Activated naive CD4-positive, alpha-beta T cell treated with anti-CD3 and anti-CD28 coated beads for 36 hours (primary cell): ENCODE measurements at regions of chr5 and their contacts with region 1.

Region 1: GRCh38 chr5:77775790-77776553 is at the start of gene TBCA:
- DNase-seq: peak; percentile 81
- H3K4me3 Mint-ChIP-seq: peak within 1 kb of the TSS; percentile 93
- H3K27ac Mint-ChIP-seq: peak within 1 kb of the TSS; percentile 96
- H3K4me1 Mint-ChIP-seq: peaks cover 46% of the 10 kb centered on the region
- H3K27me3 Mint-ChIP-seq: no peaks in the 10 kb centered on the region
- total RNA-seq, gene TBCA: 168 to 190 TPM

Region 2: GRCh38 chr5:76733049-76733417 is 1042.9 kb before region 1 on chr5:
- CTCF ChIA-PET with region 1: no interaction called
- intact Hi-C with region 1: no loop called
- DNase-seq: no peak
- H3K4me3 Mint-ChIP-seq: no peak overlapping the region
- H3K27ac Mint-ChIP-seq: no peak overlapping the region
- H3K4me1 Mint-ChIP-seq: peaks cover 4% of the 10 kb centered on the region
- H3K27me3 Mint-ChIP-seq: no peaks in the 10 kb centered on the region

Region 3: GRCh38 chr5:77139001-77139400 is 637.0 kb before region 1 on chr5:
- CTCF ChIA-PET with region 1: no interaction called
- intact Hi-C with region 1: no loop called
- DNase-seq: no peak
- H3K4me3 Mint-ChIP-seq: no peak overlapping the region
- H3K27ac Mint-ChIP-seq: no peak overlapping the region
- H3K4me1 Mint-ChIP-seq: no peaks in the 10 kb centered on the region
- H3K27me3 Mint-ChIP-seq: peaks cover 3% of the 10 kb centered on the region

Region 4: GRCh38 chr5:77379558-77380061 is 396.4 kb before region 1 on chr5:
- CTCF ChIA-PET with region 1: no interaction called
- intact Hi-C with region 1: loop called (anchors 5 kb)
- DNase-seq: peak; percentile 86
- H3K4me3 Mint-ChIP-seq: no peak overlapping the region
- H3K27ac Mint-ChIP-seq: no peak overlapping the region
- H3K4me1 Mint-ChIP-seq: peaks cover 29% of the 10 kb centered on the region
- H3K27me3 Mint-ChIP-seq: peaks cover 14% of the 10 kb centered on the region

Region 5: GRCh38 chr5:77663090-77663863 is 112.7 kb before region 1 on chr5:
- CTCF ChIA-PET with region 1: no interaction called
- intact Hi-C with region 1: loop called (anchors 2 kb)
- DNase-seq: no peak
- H3K4me3 Mint-ChIP-seq: no peak overlapping the region
- H3K27ac Mint-ChIP-seq: no peak overlapping the region
- H3K4me1 Mint-ChIP-seq: peaks cover 15% of the 10 kb centered on the region
- H3K27me3 Mint-ChIP-seq: peaks cover 27% of the 10 kb centered on the region

Region 6: GRCh38 chr5:77867194-77867691 is 91.3 kb after region 1 on chr5:
- CTCF ChIA-PET with region 1: no interaction called
- intact Hi-C with region 1: no loop called
- DNase-seq: no peak
- H3K4me3 Mint-ChIP-seq: no peak overlapping the region
- H3K27ac Mint-ChIP-seq: no peak overlapping the region
- H3K4me1 Mint-ChIP-seq: no peaks in the 10 kb centered on the region
- H3K27me3 Mint-ChIP-seq: no peaks in the 10 kb centered on the region

Region 7: GRCh38 chr5:78359831-78360673 is 584.1 kb after region 1 on chr5 and contains the start of gene SCAMP1:
- CTCF ChIA-PET with region 1: no interaction called
- intact Hi-C with region 1: loop called (anchors 1 kb)
- DNase-seq: peak; percentile 92
- H3K4me3 Mint-ChIP-seq: peak within 1 kb of the TSS; percentile 95
- H3K27ac Mint-ChIP-seq: peak within 1 kb of the TSS; percentile 97
- H3K4me1 Mint-ChIP-seq: peaks cover 34% of the 10 kb centered on the region
- H3K27me3 Mint-ChIP-seq: no peaks in the 10 kb centered on the region
- total RNA-seq, gene SCAMP1: 9.7 to 10.3 TPM

Region 8: GRCh38 chr5:79514391-79515105 is 1738.6 kb after region 1 on chr5:
- CTCF ChIA-PET with region 1: no interaction called
- intact Hi-C with region 1: loop called (anchors 5 kb)
- DNase-seq: peak; percentile 91
- H3K4me3 Mint-ChIP-seq: peak overlapping the region; percentile 96
- H3K27ac Mint-ChIP-seq: peak overlapping the region; percentile 93
- H3K4me1 Mint-ChIP-seq: peaks cover 33% of the 10 kb centered on the region
- H3K27me3 Mint-ChIP-seq: peaks cover 19% of the 10 kb centered on the region